ENCODE measurements at regions of chr9 and their contacts with region 1.

Region 1: DNA sequence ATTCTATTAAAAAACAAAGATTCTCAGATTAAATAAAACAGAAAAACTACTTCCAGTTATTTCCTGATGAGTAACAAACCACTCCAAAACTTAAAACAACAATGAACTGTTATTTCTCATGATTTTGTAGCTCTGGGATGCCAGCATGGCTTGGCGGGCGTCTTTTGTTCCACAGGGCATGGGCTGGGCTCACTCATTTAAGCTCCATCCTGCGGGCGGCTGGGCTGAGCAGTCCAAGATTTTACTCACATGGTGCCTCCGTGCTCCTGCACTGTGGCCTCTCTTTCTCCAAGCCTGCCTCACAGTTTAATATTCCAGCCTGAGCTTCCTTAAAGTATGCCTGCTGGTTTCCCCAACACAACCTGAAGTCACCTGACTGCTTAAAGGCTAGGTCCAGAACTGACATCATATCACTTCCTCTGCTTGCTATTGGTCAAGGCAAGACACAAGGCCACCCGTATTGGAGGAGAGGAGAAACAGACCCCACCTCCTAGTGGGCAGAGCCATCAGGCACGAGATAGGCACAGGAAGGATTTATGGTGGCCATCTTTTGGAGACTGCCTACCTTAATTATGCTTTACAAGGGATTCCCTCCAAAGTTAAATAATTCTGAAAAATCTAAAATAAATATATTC is 41.6 kb upstream of the ZBTB43 start:
- DNase-seq: no peak
- H3K4me3 ChIP-seq: no peak overlapping the region
- H3K27ac ChIP-seq: no peak overlapping the region
- H3K4me1 ChIP-seq: no peaks in the 10 kb centered on the region
- H3K27me3 ChIP-seq: no peaks in the 10 kb centered on the region; the same call in 1 of the 2 replicates

Region 2: GRCh38 chr9:126203126-126203712 is 560.0 kb before region 1 on chr9:
- in situ Hi-C with region 1: no loop called
- DNase-seq: no peak
- H3K4me3 ChIP-seq: no peak overlapping the region
- H3K27ac ChIP-seq: no peak overlapping the region
- H3K4me1 ChIP-seq: no peaks in the 10 kb centered on the region
- H3K27me3 ChIP-seq: peaks cover 23% of the 10 kb centered on the region

Region 3: GRCh38 chr9:126611592-126612325 is 151.5 kb before region 1 on chr9:
- in situ Hi-C with region 1: loop called (anchors 10 kb)
- DNase-seq: peak; percentile 79
- H3K4me3 ChIP-seq: no peak overlapping the region
- H3K27ac ChIP-seq: no peak overlapping the region
- H3K4me1 ChIP-seq: no peaks in the 10 kb centered on the region
- H3K27me3 ChIP-seq: peaks cover 39% of the 10 kb centered on the region

Measured in GM23248 (cell line).